ENCODE measurements at regions of chr3 and their contacts with region 1.

Region 1: GRCh38 chr3:186849374-186849975 is 7.0 kb downstream of the ADIPOQ start:
- DNase-seq: peak; percentile 73
- H3K4me3 Mint-ChIP-seq: no peak overlapping the region
- H3K27ac Mint-ChIP-seq: peak overlapping the region; percentile 2
- H3K4me1 Mint-ChIP-seq: peaks cover 15% of the 10 kb centered on the region
- H3K27me3 Mint-ChIP-seq: peaks cover 22% of the 10 kb centered on the region

Region 2: GRCh38 chr3:186901135-186901734 is 51.8 kb after region 1 on chr3:
- intact Hi-C with region 1: no loop called
- DNase-seq: peak; percentile 71
- H3K4me3 Mint-ChIP-seq: no peak overlapping the region
- H3K27ac Mint-ChIP-seq: peak overlapping the region; percentile 14
- H3K4me1 Mint-ChIP-seq: peaks cover 11% of the 10 kb centered on the region
- H3K27me3 Mint-ChIP-seq: no peaks in the 10 kb centered on the region

Region 3: DNA sequence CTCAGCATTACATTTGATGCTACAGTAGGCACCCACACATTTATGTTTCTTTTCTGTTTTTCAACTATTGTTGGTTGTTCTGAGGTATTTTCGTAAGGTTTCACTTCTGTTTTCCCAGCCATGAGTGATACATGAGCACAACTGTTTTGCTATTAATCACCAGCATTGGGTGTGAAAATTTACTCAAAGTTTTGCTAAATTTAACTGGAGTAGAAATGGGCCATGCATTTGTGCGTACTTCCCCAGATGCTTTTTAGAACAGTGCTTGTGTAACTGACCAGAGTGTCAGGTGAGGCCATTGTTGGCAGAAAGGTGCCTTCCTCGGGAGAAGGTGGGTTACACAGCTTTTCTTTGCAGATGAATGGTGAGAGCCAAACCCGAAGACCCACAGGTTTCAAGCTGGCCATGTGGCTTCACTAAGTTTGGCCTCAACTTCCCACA is 151.3 kb after region 1 on chr3:
- intact Hi-C with region 1: loop called (anchors 5 kb)
- DNase-seq: peak; percentile 78
- H3K4me3 Mint-ChIP-seq: peak overlapping the region; percentile 63
- H3K27ac Mint-ChIP-seq: peak overlapping the region; percentile 87
- H3K4me1 Mint-ChIP-seq: peaks cover 56% of the 10 kb centered on the region
- H3K27me3 Mint-ChIP-seq: no peaks in the 10 kb centered on the region

Region 4: GRCh38 chr3:187066228-187066995 is 216.9 kb after region 1 on chr3:
- intact Hi-C with region 1: loop called (anchors 2 kb)
- DNase-seq: peak; percentile 83
- H3K4me3 Mint-ChIP-seq: no peak overlapping the region
- H3K27ac Mint-ChIP-seq: peak overlapping the region; percentile 79
- H3K4me1 Mint-ChIP-seq: peaks cover 52% of the 10 kb centered on the region
- H3K27me3 Mint-ChIP-seq: no peaks in the 10 kb centered on the region

Region 5: GRCh38 chr3:187150599-187150998 is 301.1 kb after region 1 on chr3:
- intact Hi-C with region 1: loop called (anchors 1 kb)
- DNase-seq: peak; percentile 88
- H3K4me3 Mint-ChIP-seq: no peak overlapping the region
- H3K27ac Mint-ChIP-seq: no peak overlapping the region
- H3K4me1 Mint-ChIP-seq: peaks cover 4% of the 10 kb centered on the region
- H3K27me3 Mint-ChIP-seq: peaks cover 44% of the 10 kb centered on the region

Measured in activated CD4-positive, alpha-beta T cell treated with anti-CD3 and anti-CD28 coated beads, Interleukin-2, amount 10 ng/mL, durations not matched to agents 24 days and 14 days (primary cell).